ENCODE measurements at regions of chr2 and their contacts with region 1.

Region 1: GRCh38 chr2:38581193-38582147 is 21.3 kb downstream of the HNRNPLL start:
- DNase-seq: peak in 1 of 2 donors; percentile 88
- ATAC-seq: peak; percentile 78 to 87 (median 80)
- H3K4me3 ChIP-seq: no peak overlapping the region
- H3K4me3 Mint-ChIP-seq: no peak overlapping the region
- H3K27ac ChIP-seq: no peak overlapping the region
- H3K27ac Mint-ChIP-seq: no peak overlapping the region
- H3K4me1 ChIP-seq: no peaks in the 10 kb centered on the region
- H3K4me1 Mint-ChIP-seq: no peaks in the 10 kb centered on the region
- H3K27me3 ChIP-seq: no peaks in the 10 kb centered on the region
- H3K27me3 Mint-ChIP-seq: no peaks in the 10 kb centered on the region
- CTCF ChIP-seq: peak; percentile 78

Region 2: DNA sequence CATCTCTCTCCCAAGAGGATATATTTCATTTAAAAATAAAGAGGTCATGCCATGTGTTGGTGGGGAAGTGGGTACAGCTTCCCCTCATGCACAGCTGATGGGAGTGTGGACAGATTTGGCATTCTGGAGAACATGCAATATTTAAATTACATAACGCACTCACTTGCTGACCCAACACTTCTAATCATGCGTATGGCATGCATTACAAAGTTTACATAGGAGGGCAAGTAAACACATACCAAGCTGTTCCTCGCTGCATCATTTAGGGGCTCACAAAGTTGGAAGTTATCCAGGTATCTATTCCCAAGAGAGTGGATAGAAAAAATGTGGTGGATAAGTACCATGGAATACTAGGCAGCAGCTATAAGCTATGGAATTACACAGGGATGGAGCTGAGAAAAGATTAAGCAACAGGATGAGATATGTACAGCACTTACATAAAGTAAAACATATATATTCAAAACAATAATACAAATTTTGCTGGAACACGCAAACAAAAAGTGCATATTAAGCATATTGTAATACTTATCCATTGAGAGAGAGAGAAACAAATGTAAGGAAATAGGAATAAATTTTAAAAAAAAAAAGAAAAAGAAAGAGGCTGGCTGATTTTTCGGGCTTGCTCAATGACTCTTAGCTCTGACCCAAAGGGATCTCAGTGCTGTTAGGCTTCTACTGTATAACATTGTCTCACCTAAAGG is 516.5 kb before region 1 on chr2:
- intact Hi-C with region 1: no loop called
- DNase-seq: no peak
- ATAC-seq: no peak
- H3K4me3 ChIP-seq: no peak overlapping the region
- H3K4me3 Mint-ChIP-seq: no peak overlapping the region
- H3K27ac ChIP-seq: no peak overlapping the region
- H3K27ac Mint-ChIP-seq: no peak overlapping the region
- H3K4me1 ChIP-seq: no peaks in the 10 kb centered on the region
- H3K4me1 Mint-ChIP-seq: no peaks in the 10 kb centered on the region
- H3K27me3 ChIP-seq: peaks cover 2% of the 10 kb centered on the region
- H3K27me3 Mint-ChIP-seq: peaks cover 0 to 22% of the 10 kb centered on the region in 2 donors
- CTCF ChIP-seq: no peak

Region 3: GRCh38 chr2:38685116-38685735 is 103.8 kb after region 1 on chr2:
- intact Hi-C with region 1: no loop called
- DNase-seq: no peak
- ATAC-seq: no peak
- H3K4me3 ChIP-seq: no peak overlapping the region
- H3K4me3 Mint-ChIP-seq: no peak overlapping the region
- H3K27ac ChIP-seq: no peak overlapping the region
- H3K27ac Mint-ChIP-seq: no peak overlapping the region
- H3K4me1 ChIP-seq: no peaks in the 10 kb centered on the region
- H3K4me1 Mint-ChIP-seq: peaks cover 4 to 6% of the 10 kb centered on the region in 2 donors
- H3K27me3 ChIP-seq: no peaks in the 10 kb centered on the region
- H3K27me3 Mint-ChIP-seq: no peaks in the 10 kb centered on the region
- CTCF ChIP-seq: no peak

Region 4: DNA sequence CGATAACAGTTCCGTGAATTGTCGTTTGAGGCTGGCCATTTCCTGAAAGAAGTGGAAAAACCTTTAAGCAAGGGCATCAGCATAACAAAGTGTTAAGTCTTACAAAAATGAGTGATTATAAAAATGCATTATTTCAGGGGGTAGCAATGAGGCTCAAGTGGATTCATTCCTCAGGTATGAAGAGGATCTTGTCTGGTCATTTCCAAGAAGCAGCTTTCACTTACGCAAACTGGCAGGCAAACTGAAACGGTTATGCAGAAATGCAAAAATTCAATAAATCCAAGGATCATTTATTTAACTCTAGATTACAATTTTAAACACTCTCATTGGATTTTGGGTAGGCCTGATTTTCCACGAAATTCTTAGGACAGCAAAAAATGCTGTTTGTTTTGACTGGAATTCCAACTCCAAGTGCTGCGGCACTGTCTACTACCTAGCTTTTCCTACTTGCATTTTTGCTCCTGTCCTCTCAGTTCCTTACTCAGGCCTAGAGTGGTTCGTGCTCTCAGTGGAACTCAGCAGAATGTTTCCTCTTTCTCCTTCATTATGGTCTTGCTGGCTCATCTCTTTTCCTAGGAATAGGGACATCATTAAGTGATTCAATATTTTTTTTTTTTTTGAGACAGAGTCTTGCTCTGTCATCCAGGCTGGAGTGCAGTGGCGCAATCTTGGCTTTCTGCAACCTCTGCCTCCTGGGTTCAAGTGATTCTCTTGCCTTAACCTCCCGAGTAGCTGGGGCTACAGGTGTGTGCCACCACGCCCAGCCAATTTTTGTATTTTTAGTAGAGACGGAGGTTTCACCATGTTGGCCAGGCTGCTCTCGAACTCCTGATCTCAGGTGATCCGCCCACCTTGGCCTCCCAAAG is 234.4 kb after region 1 on chr2:
- intact Hi-C with region 1: loop called (anchors 10 kb)
- DNase-seq: no peak
- ATAC-seq: no peak
- H3K4me3 ChIP-seq: no peak overlapping the region
- H3K4me3 Mint-ChIP-seq: no peak overlapping the region
- H3K27ac ChIP-seq: no peak overlapping the region
- H3K27ac Mint-ChIP-seq: no peak overlapping the region
- H3K4me1 ChIP-seq: no peaks in the 10 kb centered on the region
- H3K4me1 Mint-ChIP-seq: no peaks in the 10 kb centered on the region
- H3K27me3 ChIP-seq: no peaks in the 10 kb centered on the region
- H3K27me3 Mint-ChIP-seq: no peaks in the 10 kb centered on the region
- CTCF ChIP-seq: no peak